Activated T-helper 1 cell treated with anti-CD3 and anti-CD28 coated beads, Interleukin-12 subunit alpha, Interleukin-12 subunit beta, Interleukin-2, Interleukin-4 antibody, amounts not matched to agents 30 ng/mL and 10 ng/mL and 1 ng/mL, durations not matched to agents 14 hours and 24 hours and 36 hours (primary cell): ENCODE measurements at regions of chr12 and their contacts with region 1.

Region 1: GRCh38 chr12:69570545-69571399 is 14.5 kb upstream of the CCT2 start:
- DNase-seq: peak; percentile 38
- H3K4me3 Mint-ChIP-seq: no peak overlapping the region
- H3K27ac Mint-ChIP-seq: no peak overlapping the region
- H3K4me1 Mint-ChIP-seq: peaks cover 10% of the 10 kb centered on the region
- H3K27me3 Mint-ChIP-seq: no peaks in the 10 kb centered on the region

Region 2: DNA sequence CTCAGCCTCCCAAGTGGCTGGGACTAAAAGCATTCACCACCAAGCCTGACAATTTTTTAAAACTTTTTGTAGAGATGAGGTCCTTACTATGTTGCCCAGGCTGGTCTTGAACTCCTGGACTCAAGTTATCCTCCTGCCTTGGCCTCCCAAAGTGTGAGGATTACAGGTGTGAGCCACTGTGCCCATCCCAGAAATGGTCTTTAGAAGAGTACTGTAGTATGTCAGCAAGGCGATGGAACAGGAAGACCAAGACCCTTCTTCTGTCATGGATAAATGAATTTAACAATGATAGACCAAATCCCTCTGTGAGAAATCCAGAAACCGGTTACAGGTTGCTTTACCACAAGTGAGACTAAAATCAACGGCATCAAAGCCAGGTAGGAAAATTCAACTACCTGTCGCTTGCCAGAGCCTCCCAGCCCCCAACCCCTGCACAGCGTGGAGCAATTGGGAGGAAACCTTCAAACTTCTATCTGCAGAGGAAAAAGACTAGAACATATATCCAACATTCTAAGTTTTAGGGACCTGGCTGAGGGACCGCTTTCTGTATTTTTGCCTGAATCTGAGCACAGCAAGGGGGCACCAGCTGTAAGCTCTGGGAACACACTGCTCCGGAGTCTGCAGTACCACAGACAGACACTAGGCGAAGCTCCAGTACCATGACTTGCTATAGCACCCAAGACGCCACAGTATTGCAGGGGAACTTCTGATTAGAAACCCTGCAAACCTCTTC is 280.1 kb before region 1 on chr12:
- intact Hi-C with region 1: loop called (anchors 1 kb)
- DNase-seq: peak; percentile 60
- H3K4me3 Mint-ChIP-seq: no peak overlapping the region
- H3K27ac Mint-ChIP-seq: no peak overlapping the region
- H3K4me1 Mint-ChIP-seq: no peaks in the 10 kb centered on the region
- H3K27me3 Mint-ChIP-seq: peaks cover 27% of the 10 kb centered on the region

Region 3: DNA sequence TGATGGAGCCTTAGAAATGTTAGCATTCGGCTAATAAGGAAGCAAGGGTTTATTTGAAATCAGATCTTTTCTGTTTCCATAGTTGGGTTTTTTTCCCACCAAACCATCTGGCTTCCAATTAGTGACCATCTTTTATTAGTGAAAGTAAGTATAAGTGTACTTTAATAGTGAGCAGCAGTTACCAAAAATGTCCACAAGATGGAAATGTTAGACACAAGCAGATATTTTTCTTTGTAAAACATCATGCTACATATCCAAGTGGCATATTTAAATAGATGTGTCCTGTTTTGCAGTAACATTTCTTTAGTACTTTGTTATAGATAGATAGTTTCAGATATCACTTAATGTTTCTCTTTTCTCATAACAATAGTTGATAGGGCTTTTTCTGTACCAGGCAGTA is 182.4 kb before region 1 on chr12:
- intact Hi-C with region 1: loop called (anchors 1 kb)
- DNase-seq: no peak
- H3K4me3 Mint-ChIP-seq: no peak overlapping the region
- H3K27ac Mint-ChIP-seq: no peak overlapping the region
- H3K4me1 Mint-ChIP-seq: no peaks in the 10 kb centered on the region
- H3K27me3 Mint-ChIP-seq: no peaks in the 10 kb centered on the region

Region 4: DNA sequence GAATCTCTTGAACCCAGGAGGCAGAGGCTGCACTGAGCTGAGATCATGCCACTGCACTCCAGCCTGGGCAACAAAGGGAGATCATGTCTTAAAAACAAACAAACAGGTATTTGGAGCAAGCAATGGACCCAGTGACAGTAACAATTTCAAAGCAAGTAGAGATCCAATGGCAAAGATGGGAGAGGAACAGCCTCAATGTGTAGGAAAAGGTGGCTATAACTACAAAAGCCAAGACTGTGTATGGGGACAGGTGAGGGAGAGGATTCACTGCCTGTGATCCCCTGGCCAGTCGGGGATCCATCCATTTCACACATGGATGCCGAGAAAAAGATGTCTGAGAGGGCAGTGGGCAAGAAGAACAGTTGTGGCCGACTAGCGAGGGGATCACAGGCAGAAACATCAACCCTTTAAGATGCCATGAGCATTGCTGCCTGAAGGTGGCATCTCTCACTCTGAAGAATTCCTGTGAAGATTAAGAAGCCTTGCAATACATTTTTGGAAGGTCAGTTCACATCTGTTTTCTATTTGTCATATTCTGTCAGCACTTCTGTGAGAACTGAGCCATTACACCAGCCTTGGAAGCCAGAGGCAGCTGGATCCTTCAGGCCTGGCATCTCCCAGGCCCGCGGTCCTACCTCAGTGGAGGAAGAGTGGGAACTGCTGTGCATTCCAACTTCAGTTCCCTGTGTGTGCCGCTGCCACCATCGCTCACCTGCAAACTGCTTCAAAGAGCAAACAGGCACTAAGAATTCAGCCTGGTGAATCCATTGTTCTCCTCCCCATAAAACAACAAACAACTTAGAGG is 155.1 kb before region 1 on chr12:
- intact Hi-C with region 1: loop called (anchors 1 kb)
- DNase-seq: no peak
- H3K4me3 Mint-ChIP-seq: no peak overlapping the region
- H3K27ac Mint-ChIP-seq: no peak overlapping the region
- H3K4me1 Mint-ChIP-seq: no peaks in the 10 kb centered on the region
- H3K27me3 Mint-ChIP-seq: no peaks in the 10 kb centered on the region

Region 5: DNA sequence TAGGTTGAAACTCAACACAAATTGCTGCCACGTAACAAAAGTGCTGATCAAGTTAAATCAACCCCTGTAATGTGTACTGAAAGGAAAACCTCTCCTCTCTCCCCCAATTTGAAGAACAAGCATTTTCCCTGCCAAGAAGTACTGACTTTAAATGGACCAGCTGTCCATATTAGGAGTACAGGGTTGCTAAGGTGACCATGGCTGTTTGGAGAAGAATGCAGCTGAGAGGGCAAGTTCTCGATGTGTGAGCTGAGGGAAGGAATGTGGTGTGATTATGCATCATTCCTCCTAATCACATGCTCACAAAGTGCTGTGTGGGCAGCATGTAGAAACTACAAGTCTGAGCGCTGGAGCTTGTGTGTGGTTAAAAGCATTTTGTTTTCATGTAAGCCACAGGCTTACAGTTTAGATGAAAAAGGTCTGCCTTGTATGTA is 36.4 kb before region 1 on chr12:
- intact Hi-C with region 1: loop called (anchors 1 kb)
- DNase-seq: peak; percentile 20
- H3K4me3 Mint-ChIP-seq: no peak overlapping the region
- H3K27ac Mint-ChIP-seq: peak overlapping the region; percentile 79
- H3K4me1 Mint-ChIP-seq: peaks cover 24% of the 10 kb centered on the region
- H3K27me3 Mint-ChIP-seq: no peaks in the 10 kb centered on the region

Region 6: DNA sequence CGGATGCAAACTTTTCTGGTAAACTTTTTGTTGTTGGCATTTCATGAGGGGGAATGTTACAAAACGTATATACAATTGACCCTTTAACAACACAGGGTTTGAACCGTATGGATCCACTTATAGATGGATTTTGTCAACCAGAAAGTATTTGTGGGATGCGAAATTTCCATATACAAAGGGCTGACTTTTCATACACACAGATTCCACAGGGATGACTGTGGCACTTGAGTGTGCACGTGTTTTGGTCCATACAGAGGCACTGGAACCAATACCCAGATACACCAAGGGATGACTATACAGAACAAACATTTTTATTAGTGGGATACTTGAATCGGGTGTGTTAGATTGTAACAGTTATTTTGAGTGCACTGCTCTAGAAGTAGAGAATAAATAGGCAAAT is 15.3 kb before region 1 on chr12:
- intact Hi-C with region 1: no loop called
- DNase-seq: no peak
- H3K4me3 Mint-ChIP-seq: no peak overlapping the region
- H3K27ac Mint-ChIP-seq: no peak overlapping the region
- H3K4me1 Mint-ChIP-seq: no peaks in the 10 kb centered on the region
- H3K27me3 Mint-ChIP-seq: peaks cover 2% of the 10 kb centered on the region

Region 7: DNA sequence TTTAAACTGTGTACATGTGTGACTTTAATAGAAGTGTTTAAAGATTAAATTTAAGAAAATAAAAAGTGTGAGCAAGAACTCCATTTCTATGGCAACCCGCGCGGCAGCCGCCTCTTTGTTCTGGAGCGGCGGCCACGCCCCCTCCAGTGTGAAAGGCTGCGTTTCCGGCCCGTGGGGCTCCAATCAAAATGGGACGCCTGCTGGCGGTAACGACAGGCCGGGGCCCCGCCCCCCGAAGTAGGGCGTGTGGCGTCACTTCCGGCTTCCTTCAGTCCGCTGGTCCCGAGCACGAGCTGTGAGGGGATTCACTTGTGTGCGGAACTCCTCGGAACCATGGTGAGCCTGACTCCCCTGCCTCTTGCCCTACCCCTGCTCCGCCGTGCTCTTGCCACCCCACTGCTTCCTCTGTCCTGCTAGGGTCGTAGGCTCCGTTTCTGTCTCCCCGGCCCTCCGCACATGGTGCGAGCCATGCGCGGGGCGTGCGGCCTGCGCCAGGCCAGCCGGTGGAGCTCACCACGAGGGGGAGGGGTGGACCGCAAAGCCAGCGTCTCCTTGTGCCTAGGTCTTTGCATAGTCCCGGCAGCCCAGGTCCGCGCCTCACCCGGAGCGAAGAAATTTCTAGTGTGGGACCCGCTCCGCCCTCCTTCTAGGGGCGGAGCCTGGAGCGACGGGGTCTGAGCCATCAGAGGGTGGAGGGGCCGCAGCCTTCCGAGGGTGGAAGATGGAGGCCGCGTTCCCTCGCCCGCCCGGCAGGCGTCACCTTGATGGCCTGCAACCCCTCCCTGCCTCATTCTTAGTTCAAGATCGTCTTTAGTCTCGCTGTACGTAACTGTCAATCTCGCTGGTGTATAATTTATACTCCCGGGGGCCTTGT is 14.7 kb after region 1 on chr12 and contains the start of gene CCT2:
- intact Hi-C with region 1: loop called (anchors 1 kb)
- DNase-seq: peak; percentile 94
- H3K4me3 Mint-ChIP-seq: peak within 1 kb of the TSS; percentile 98
- H3K27ac Mint-ChIP-seq: peak within 1 kb of the TSS; percentile 97
- H3K4me1 Mint-ChIP-seq: peaks cover 11% of the 10 kb centered on the region
- H3K27me3 Mint-ChIP-seq: no peaks in the 10 kb centered on the region
- total RNA-seq, gene CCT2: 442 and 447 TPM in 2 replicates